ENCODE measurements at regions of chr16 and their contacts with region 1.

Region 1: DNA sequence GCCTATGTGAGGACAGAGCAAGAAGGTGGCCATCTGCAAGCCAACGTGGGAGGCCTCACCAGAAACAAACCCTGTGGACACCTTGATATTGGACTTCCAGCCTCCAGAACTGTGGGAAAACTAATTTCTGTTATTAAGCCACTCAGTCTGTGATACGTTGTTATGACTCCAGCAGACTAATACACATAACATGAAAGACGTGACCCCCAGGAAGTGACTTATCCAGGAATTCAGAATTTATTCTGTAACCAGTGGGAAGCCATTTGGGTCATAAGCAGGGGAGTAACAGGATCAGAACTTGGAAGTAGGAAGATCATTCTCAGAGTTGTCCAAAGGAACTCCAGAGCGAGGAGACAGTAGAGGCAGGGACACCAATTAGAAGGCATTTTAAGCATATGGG is 12.5 kb upstream of the GINS3 start:
- DNase-seq: no peak
- H3K4me3 ChIP-seq: no peak overlapping the region
- H3K27ac ChIP-seq: no peak overlapping the region
- H3K4me1 ChIP-seq: no peaks in the 10 kb centered on the region
- H3K27me3 ChIP-seq: no peaks in the 10 kb centered on the region
- CTCF ChIP-seq: no peak
- EP300 ChIP-seq: no peak
- POLR2A ChIP-seq: no peak

Region 2: DNA sequence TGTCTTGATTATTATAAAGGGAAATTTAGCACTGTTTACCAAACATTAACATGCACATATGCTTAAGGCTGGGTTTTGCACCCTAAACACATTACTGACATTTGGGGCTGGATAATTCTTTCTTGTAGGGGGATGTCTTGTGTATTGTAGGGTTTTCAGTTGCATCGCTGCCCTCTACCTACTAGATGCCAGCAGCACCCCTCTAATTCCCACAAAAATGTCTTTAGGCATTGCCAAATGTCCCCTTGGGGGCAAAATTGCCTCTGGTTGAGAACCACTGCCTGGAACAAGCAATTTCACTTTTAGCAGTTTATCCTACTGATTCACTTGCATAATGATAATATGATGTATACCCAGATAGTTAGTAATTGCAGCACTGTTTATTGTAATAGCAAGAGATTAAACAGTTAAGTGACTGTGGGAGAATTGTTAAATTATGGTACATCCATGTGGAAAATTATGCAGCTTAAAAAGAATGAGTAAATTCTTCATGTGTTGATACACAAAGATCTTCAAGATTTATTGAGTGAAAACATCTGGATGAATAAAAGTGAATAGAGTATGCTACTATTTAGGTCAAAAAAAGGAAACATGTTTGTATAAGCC is 103.3 kb before region 1 on chr16:
- intact Hi-C with region 1: no loop called
- DNase-seq: no peak
- H3K4me3 ChIP-seq: no peak overlapping the region
- H3K27ac ChIP-seq: no peak overlapping the region
- H3K4me1 ChIP-seq: no peaks in the 10 kb centered on the region
- H3K27me3 ChIP-seq: no peaks in the 10 kb centered on the region
- CTCF ChIP-seq: no peak
- EP300 ChIP-seq: no peak
- POLR2A ChIP-seq: no peak

Region 3: DNA sequence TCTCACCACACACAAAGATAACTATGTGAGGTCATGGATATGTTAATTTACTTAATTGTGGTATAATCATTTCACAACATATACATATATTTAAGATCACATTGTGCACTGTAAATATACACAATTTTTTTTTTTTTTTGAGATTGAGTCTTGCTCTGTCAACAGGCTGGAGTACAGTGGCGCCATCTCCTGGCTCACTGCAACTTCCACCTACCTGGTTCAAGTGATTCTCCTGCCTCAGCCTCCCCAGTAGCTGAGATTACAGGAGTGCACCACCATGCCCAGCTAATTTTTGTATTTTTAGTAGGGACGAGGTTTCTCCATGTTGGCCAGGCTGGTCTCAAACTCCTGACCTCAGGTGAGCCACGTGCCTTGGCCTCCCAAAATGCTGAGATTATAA is 73.4 kb before region 1 on chr16:
- intact Hi-C with region 1: loop called in 1 of 4 experiments (anchors 2 kb)
- DNase-seq: no peak
- H3K4me3 ChIP-seq: no peak overlapping the region
- H3K27ac ChIP-seq: no peak overlapping the region
- H3K4me1 ChIP-seq: no peaks in the 10 kb centered on the region
- H3K27me3 ChIP-seq: no peaks in the 10 kb centered on the region
- CTCF ChIP-seq: no peak
- EP300 ChIP-seq: no peak
- POLR2A ChIP-seq: no peak

Region 4: GRCh38 chr16:58451945-58452401 is 72.2 kb after region 1 on chr16:
- intact Hi-C with region 1: no loop called
- DNase-seq: no peak
- H3K4me3 ChIP-seq: no peak overlapping the region
- H3K27ac ChIP-seq: no peak overlapping the region
- H3K4me1 ChIP-seq: no peaks in the 10 kb centered on the region
- H3K27me3 ChIP-seq: no peaks in the 10 kb centered on the region
- CTCF ChIP-seq: no peak
- EP300 ChIP-seq: no peak
- POLR2A ChIP-seq: no peak

Region 5: GRCh38 chr16:58471321-58471975 is 91.7 kb after region 1 on chr16:
- intact Hi-C with region 1: no loop called
- DNase-seq: no peak
- H3K4me3 ChIP-seq: no peak overlapping the region
- H3K27ac ChIP-seq: no peak overlapping the region
- H3K4me1 ChIP-seq: no peaks in the 10 kb centered on the region
- H3K27me3 ChIP-seq: no peaks in the 10 kb centered on the region
- CTCF ChIP-seq: no peak
- EP300 ChIP-seq: no peak
- POLR2A ChIP-seq: no peak